Activated T-helper 1 cell treated with anti-CD3 and anti-CD28 coated beads, Interleukin-12 subunit alpha, Interleukin-12 subunit beta, Interleukin-2, Interleukin-4 antibody, amounts not matched to agents 30 ng/mL and 10 ng/mL and 1 ng/mL, durations not matched to agents 14 hours and 24 hours and 36 hours (primary cell): ENCODE measurements at regions of chr17 and their contacts with region 1.

Region 1: DNA sequence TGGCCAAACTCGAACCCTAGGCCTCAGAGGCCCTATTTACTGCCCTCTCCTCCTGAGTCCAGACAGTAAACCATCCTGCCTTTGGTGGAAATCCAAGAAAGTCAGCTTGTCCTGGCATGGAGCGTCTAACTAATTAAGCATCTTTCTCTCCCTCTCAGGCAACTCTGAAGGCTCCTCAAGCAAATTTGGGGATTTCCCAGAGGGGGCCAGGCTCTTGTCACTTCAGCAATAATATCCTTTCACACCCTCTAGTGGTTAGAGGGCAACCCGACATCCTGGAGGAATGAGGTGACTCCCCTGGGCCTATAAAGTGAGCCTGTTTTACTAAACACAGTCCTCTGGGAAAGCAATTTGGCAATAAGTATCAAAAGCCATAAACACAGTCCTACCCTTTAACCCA is 60.4 kb downstream of the NOG start:
- DNase-seq: peak; percentile 52
- H3K4me3 Mint-ChIP-seq: no peak overlapping the region
- H3K27ac Mint-ChIP-seq: no peak overlapping the region
- H3K4me1 Mint-ChIP-seq: peaks cover 7% of the 10 kb centered on the region
- H3K27me3 Mint-ChIP-seq: peaks cover 27% of the 10 kb centered on the region

Region 2: DNA sequence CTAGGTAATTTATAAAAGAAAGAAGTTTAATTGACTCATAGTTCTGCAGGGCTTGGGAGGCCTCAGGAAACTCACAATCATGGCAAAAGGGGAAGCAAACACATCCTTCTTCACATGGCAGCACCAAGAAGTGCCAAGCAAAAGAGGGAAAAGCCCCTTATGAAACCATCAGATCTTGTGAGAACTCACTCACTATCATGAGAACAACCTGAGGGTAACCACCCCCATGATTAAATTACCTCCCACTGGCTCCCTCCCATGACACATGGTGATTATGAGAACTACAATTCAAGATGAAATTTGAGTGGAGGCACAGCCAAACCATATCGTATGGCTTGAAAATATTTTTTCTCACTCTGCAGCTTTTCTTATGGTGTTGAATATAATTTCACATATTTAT is 348.9 kb before region 1 on chr17:
- intact Hi-C with region 1: no loop called
- DNase-seq: no peak
- H3K4me3 Mint-ChIP-seq: no peak overlapping the region
- H3K27ac Mint-ChIP-seq: no peak overlapping the region
- H3K4me1 Mint-ChIP-seq: no peaks in the 10 kb centered on the region
- H3K27me3 Mint-ChIP-seq: peaks cover 5% of the 10 kb centered on the region

Region 3: DNA sequence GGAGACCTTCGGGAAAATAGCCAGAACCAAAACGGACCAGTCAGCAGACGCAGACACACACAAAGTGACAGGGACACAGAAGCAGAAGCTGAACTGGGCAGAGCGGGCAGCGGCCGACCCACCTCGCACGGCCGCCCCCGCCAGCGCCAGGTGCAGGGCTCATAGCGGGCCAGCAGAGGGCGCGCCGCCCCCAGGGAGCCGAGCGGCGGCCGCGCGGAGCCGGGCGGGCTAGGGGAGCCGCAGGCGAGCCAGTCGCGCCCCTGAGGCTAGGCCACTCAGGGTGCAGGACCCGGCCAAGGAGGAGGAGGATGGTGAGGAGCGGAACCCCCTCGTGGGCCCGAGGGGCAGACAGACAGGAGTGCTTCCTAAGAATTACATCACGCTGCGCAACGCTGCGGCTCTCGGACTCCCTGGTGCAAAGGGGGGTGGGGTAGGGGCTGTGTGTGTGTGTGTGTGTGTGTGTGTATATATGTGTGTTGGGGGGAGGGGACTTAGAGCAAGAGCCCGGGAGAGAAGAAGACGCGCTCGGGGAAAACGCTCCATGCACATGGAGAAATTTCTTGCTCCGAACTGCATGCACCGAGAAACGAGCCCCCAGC is 61.3 kb before region 1 on chr17:
- intact Hi-C with region 1: loop called (anchors 1 kb)
- DNase-seq: peak; percentile 39
- H3K4me3 Mint-ChIP-seq: peak overlapping the region; percentile 66
- H3K27ac Mint-ChIP-seq: no peak overlapping the region
- H3K4me1 Mint-ChIP-seq: peaks cover 17% of the 10 kb centered on the region
- H3K27me3 Mint-ChIP-seq: peaks cover 56% of the 10 kb centered on the region

Region 4: GRCh38 chr17:56679115-56679766 is 25.4 kb after region 1 on chr17:
- intact Hi-C with region 1: loop called (anchors 2 kb)
- DNase-seq: no peak
- H3K4me3 Mint-ChIP-seq: no peak overlapping the region
- H3K27ac Mint-ChIP-seq: no peak overlapping the region
- H3K4me1 Mint-ChIP-seq: peaks cover 21% of the 10 kb centered on the region
- H3K27me3 Mint-ChIP-seq: peaks cover 42% of the 10 kb centered on the region